Activated naive CD4-positive, alpha-beta T cell treated with anti-CD3 and anti-CD28 coated beads for 36 hours (primary cell): ENCODE measurements at regions of chr7 and their contacts with region 1.

Region 1: DNA sequence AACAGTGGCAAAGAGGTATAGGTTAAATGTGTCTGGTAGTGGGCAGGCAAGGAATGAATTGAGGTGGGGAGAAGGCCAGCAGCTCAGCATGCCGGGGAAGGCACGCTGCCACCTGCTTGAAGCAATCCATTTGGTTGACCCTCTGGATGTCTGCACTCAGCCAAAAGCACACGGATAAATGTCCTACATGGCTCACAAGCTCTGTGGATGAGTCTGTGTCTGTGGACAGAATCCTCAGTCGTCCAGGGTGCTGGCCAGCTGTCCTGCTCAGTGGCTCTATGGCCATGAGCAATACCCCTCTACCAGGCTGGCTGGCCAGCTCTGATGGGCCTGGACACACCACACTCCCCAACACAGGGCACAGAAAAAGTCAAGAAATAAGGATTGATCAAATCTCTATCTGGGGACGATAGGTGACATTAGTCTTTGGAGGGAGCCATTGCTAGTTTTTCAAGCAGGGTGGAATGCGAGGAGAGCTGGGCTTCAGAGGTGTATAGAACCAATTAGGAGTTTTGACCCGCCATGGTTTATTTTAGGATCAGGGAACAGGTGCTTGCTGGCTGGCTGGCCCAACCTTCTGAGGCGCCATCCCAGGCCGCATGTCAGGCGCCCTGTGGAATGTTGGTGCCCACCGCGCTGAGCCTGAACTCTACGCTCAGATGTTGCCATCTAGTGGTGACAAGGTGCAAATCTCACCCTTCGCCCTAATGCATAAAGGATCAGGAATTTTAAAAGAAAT is 493.4 kb downstream of the TNS3 start:
- DNase-seq: peak; percentile 20
- H3K4me3 Mint-ChIP-seq: no peak overlapping the region
- H3K27ac Mint-ChIP-seq: no peak overlapping the region
- H3K4me1 Mint-ChIP-seq: no peaks in the 10 kb centered on the region
- H3K27me3 Mint-ChIP-seq: peaks cover 9% of the 10 kb centered on the region

Region 2: DNA sequence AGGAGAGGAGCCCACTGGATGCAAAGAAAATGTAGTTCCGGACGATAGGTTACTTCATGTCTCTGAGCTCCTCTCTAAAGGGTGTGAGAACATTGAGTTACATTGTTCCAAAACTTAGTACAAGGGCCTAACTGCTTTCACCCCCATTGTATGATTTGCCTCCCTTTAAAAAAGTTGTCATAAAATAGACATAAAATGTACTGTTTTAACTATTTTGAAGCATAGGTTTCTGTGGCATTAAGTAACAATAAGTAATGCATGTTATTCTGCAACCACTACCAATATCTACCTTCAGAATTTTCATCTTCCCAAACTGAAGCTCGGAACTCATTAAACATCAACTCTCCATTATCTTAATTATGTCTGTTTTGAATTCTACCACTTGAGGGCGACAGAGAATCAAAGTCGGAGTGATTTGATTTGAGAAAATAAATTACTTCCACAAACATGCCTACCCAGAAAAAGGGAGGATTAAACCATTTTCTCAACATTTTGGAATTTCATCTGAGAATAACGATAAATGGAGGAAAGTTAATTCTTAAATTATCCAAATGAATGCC is 1197.5 kb before region 1 on chr7:
- CTCF ChIA-PET with region 1: interaction called, 3 read pairs
- intact Hi-C with region 1: loop called (anchors 1 kb)
- DNase-seq: no peak
- H3K4me3 Mint-ChIP-seq: no peak overlapping the region
- H3K27ac Mint-ChIP-seq: no peak overlapping the region
- H3K4me1 Mint-ChIP-seq: peaks cover 2% of the 10 kb centered on the region
- H3K27me3 Mint-ChIP-seq: peaks cover 50% of the 10 kb centered on the region

Region 3: DNA sequence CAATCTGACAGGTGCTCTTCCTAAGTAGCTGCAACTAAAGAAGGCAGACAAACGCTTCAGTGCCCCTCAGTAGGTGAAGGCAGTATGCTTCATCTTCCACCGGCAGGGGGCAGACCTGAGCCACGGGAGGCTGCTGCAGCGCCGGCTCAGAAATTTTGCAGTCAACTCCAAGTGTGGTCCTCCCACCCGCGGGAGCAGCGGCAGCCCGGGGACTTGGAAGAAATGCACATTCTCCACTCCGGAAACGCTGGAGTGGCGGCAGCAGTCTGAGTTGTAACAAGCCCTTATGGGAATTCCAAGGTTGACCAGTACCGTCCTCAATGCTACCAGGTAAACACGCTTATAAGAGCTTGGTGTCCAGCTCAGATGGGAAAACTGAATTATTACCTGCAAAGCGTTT is 1170.8 kb before region 1 on chr7:
- CTCF ChIA-PET with region 1: interaction called, 8 read pairs
- intact Hi-C with region 1: loop called (anchors 1 kb)
- DNase-seq: peak; percentile 85
- H3K4me3 Mint-ChIP-seq: no peak overlapping the region
- H3K27ac Mint-ChIP-seq: no peak overlapping the region
- H3K4me1 Mint-ChIP-seq: peaks cover 22% of the 10 kb centered on the region
- H3K27me3 Mint-ChIP-seq: peaks cover 43% of the 10 kb centered on the region

Region 4: DNA sequence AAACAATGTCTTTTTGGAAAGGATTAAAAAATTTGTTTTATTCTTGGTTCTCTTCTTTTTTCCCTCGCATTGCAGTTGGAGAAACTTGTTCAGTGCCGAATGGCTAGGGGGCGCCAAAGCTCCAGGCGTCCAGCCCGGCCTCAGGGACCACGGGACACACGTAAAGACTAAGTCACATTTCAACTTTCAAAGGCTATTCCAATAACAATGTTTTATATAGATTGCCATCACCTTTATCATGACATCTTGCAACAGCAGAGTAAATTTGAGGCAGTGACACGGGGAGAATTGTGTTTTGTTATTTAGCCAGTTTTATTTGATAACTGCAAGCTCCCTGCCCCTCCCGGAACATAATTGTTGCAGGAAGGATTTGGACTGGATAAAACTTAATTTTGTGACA is 1165.2 kb before region 1 on chr7:
- CTCF ChIA-PET with region 1: interaction called, 8 read pairs
- intact Hi-C with region 1: loop called (anchors 1 kb)
- DNase-seq: peak; percentile 81
- H3K4me3 Mint-ChIP-seq: peak overlapping the region; percentile 44
- H3K27ac Mint-ChIP-seq: no peak overlapping the region
- H3K4me1 Mint-ChIP-seq: peaks cover 32% of the 10 kb centered on the region
- H3K27me3 Mint-ChIP-seq: peaks cover 39% of the 10 kb centered on the region

Region 5: DNA sequence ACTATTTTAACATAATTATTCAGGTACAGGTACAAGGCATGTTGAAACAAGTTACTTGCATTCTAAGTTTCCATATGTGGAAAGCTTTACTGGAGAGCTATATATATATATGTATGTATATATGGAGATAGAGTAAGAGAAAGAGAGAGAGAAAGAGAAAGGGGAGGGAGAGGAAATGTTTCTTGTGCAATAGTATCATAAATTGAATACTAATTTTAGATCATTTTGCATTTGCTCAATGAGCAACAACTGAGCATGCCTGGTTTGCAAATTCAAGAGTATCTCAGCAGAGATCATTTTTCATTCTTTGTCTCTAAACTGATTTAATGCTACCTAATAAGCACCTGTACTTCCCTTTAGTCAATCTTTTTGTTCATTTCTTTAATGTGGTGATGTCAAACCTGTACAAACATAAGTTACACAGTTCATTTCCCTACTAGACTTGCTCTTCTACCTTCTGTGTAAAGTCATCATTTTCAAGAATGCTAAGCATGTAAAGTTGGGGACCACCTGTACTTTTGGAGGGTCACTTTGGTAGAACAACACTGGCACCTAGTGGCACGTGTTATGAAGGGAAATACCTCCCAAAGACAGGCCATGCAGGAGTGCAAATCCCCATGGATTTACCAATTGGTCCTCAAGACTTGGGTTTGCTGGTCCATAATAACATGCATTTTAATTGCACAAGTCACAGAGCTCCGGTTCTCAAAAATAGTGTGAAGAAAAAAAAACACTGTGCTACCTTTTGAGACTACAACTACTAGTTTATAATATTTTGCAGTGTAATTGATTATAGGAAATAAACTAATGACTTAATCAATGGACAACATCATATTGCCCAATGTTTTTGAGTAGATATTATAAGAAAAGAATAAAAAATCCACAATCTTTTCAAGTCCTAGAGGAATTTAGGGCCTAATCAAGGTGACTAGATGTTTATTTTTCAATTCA is 736.2 kb before region 1 on chr7:
- CTCF ChIA-PET with region 1: no interaction called
- intact Hi-C with region 1: loop called (anchors 10 kb)
- DNase-seq: peak; percentile 42
- H3K4me3 Mint-ChIP-seq: no peak overlapping the region
- H3K27ac Mint-ChIP-seq: no peak overlapping the region
- H3K4me1 Mint-ChIP-seq: no peaks in the 10 kb centered on the region
- H3K27me3 Mint-ChIP-seq: peaks cover 5% of the 10 kb centered on the region

Region 6: DNA sequence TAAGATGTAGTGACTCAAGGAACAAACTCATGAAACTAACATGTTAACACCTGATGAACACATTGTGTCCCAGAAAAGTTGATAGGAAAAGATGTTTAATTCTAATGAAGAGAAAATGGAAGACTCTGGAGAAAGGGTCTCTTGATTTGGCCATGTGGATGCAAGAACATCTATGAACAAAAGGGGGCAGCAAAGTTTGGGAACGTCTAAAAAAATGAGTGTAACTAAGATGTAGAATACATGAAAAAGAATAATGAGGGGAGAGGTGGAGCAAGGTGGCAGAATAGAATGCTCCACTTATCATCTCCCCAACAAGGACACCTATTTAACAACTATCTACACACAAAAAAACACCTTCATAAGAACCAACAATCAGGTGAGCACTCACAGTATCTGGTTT is 311.7 kb before region 1 on chr7:
- CTCF ChIA-PET with region 1: no interaction called
- intact Hi-C with region 1: loop called (anchors 2 kb)
- DNase-seq: no peak
- H3K4me3 Mint-ChIP-seq: no peak overlapping the region
- H3K27ac Mint-ChIP-seq: no peak overlapping the region
- H3K4me1 Mint-ChIP-seq: no peaks in the 10 kb centered on the region
- H3K27me3 Mint-ChIP-seq: no peaks in the 10 kb centered on the region

Region 7: GRCh38 chr7:47039904-47040303 is 48.6 kb before region 1 on chr7:
- CTCF ChIA-PET with region 1: no interaction called
- intact Hi-C with region 1: no loop called
- DNase-seq: no peak
- H3K4me3 Mint-ChIP-seq: no peak overlapping the region
- H3K27ac Mint-ChIP-seq: no peak overlapping the region
- H3K4me1 Mint-ChIP-seq: no peaks in the 10 kb centered on the region
- H3K27me3 Mint-ChIP-seq: peaks cover 2% of the 10 kb centered on the region

Region 8: GRCh38 chr7:47254081-47255006 is 165.8 kb after region 1 on chr7:
- CTCF ChIA-PET with region 1: no interaction called
- intact Hi-C with region 1: loop called (anchors 10 kb)
- DNase-seq: peak; percentile 43
- H3K4me3 Mint-ChIP-seq: peak overlapping the region; percentile 29
- H3K27ac Mint-ChIP-seq: no peak overlapping the region
- H3K4me1 Mint-ChIP-seq: peaks cover 4% of the 10 kb centered on the region
- H3K27me3 Mint-ChIP-seq: peaks cover 24% of the 10 kb centered on the region